ENCODE measurements at regions of chr3 and their contacts with region 1.

Region 1: GRCh38 chr3:69324362-69325025 is 61.4 kb downstream of the FRMD4B start:
- DNase-seq: no peak
- ATAC-seq: peak; percentile 32

Region 2: GRCh38 chr3:69406163-69406562 is 81.7 kb after region 1 on chr3:
- intact Hi-C with region 1: loop called (anchors 5 kb)
- DNase-seq: no peak
- ATAC-seq: peak; percentile 59

Region 3: DNA sequence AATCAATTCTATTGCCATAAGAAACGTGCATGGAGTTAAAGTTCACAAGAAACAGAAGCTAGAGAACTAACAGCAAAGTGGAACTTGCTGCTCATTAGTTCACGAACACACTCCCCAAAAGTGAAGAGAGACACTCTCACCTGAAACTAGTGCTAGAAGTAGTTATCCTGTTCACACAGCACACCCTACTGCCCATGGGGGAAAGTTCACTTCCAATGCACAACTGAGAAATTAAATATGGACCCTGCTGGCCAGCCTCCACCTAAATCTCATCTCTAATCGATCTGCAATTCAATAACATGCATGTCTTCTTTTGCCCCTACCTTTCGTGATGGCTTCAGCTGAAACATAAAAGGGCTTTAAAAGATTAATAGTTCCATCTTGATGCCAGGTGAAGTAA is 100.8 kb after region 1 on chr3:
- intact Hi-C with region 1: no loop called
- DNase-seq: no peak
- ATAC-seq: no peak

Measured in Right ventricle myocardium superior (tissue), 1 donor.